ENCODE measurements at regions of chr1 and their contacts with region 1.

Region 1: GRCh38 chr1:232226197-232226712 is 403.7 kb downstream of the SIPA1L2 start:
- DNase-seq: peak; percentile 60
- H3K4me3 Mint-ChIP-seq: no peak overlapping the region
- H3K27ac Mint-ChIP-seq: peak overlapping the region; percentile 29
- H3K4me1 Mint-ChIP-seq: peaks cover 9% of the 10 kb centered on the region
- H3K27me3 Mint-ChIP-seq: no peaks in the 10 kb centered on the region

Region 2: GRCh38 chr1:232259333-232259732 is 33.1 kb after region 1 on chr1:
- CTCF ChIA-PET with region 1: no interaction called
- POLR2A ChIA-PET with region 1: no interaction called
- intact Hi-C with region 1: loop called (anchors 1 kb)
- DNase-seq: no peak
- H3K4me3 Mint-ChIP-seq: no peak overlapping the region
- H3K27ac Mint-ChIP-seq: no peak overlapping the region
- H3K4me1 Mint-ChIP-seq: no peaks in the 10 kb centered on the region
- H3K27me3 Mint-ChIP-seq: peaks cover 19% of the 10 kb centered on the region

Region 3: GRCh38 chr1:233121947-233122559 is 895.8 kb after region 1 on chr1:
- CTCF ChIA-PET with region 1: no interaction called
- POLR2A ChIA-PET with region 1: no interaction called
- intact Hi-C with region 1: no loop called
- DNase-seq: no peak
- H3K4me3 Mint-ChIP-seq: no peak overlapping the region
- H3K27ac Mint-ChIP-seq: no peak overlapping the region
- H3K4me1 Mint-ChIP-seq: no peaks in the 10 kb centered on the region
- H3K27me3 Mint-ChIP-seq: no peaks in the 10 kb centered on the region

Measured in activated CD4-positive, alpha-beta memory T cell treated with anti-CD3 and anti-CD28 coated beads for 36 hours (primary cell).